Sciatic nerve (tissue), 2 donors: ENCODE measurements at regions of chrX and their contacts with region 1.

Region 1: DNA sequence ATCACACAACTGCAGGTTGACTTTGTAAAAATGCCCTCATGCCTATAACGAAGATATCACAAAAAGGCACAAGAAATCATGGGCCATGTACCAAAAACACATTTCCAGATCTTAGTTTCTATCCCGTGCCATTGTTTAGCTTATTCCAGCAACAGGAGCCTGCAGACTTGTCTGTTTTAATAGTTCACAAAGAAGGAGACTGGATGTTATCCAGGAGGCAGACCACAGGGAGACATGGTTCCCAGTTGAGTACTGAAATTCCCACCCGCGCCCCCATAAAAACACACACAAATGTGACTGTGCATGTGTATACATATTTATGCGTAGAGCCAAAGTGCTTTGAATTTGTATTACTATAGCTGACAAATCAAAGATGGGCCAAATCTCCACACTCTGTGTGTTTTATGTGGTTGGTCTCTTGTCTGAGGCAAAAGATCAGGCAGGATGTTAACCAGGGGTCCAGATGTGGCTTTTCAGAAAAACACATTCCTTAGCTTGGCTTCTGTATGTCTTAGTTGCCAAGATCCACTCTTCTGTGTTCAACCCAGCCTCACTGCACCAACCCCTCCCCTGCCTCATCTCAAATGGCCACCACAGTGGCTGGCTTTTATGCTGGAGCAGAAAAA is 469.2 kb upstream of the DIPK2B start:
- DNase-seq: no peak
- ATAC-seq: no peak

Region 2: GRCh38 chrX:45619290-45619689 is 50.5 kb before region 1 on chrX:
- intact Hi-C with region 1: loop called (anchors 10 kb)
- DNase-seq: no peak
- ATAC-seq: no peak